Common myeloid progenitor, CD34-positive (primary cell): ENCODE measurements at regions of chr6 and their contacts with region 1.

Region 1: GRCh38 chr6:169789982-169790927 is 38.8 kb downstream of the ERMARD start:
- DNase-seq: peak; percentile 60 to 79 (median 76)
- H3K4me3 ChIP-seq: peak overlapping the region in 6 of 7 experiments; percentile 54 to 78 (median 66)
- H3K27ac ChIP-seq: no peak overlapping the region
- H3K4me1 ChIP-seq: peaks cover 0 to 15% (median 11%) of the 10 kb centered on the region in 4 experiments
- H3K27me3 ChIP-seq: peaks cover 2 to 31% (median 16%) of the 10 kb centered on the region in 5 experiments

Region 2: DNA sequence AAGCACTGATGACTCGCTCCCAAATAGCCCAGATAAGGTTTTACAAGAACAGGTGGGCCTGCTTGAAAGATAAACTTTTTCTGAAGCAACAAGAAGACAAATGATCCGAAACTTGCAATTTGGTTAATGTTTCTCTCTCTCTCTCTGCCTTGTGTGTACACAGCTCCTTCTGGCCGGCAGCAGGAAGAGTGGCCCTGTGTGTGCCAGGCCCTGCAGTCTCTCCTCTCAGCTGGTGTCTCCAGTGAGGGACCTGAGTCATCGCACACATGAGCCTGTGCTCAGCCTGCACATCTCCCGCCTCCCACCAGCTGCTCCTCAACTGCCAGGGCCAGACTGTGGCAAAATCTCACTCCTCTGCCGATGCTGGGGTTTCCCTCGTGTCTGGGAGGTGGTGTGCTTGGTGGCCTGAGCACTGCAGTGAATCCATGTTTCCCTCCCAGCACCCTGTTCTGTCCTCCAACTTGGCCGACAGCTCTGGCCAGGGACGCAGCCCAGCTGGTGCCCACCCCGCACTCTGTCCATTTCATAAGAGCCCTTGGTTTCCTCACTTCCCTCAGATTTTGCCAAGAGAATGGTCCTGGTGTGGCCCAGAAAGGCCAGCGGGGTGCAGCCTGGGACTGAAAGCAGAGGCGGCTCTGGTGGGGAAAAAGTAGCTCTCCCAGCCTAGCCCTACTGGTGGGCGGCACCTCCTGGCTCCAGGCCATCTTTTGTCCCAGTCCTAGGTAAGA is 10.6 kb after region 1 on chr6:
- CTCF ChIA-PET with region 1: interaction called, 72 read pairs
- POLR2A ChIA-PET with region 1: interaction called, 4 read pairs
- DNase-seq: peak in 1 of 3 donors; percentile 8
- H3K4me3 ChIP-seq: no peak overlapping the region
- H3K27ac ChIP-seq: no peak overlapping the region
- H3K4me1 ChIP-seq: peaks cover 0 to 9% (median 6%) of the 10 kb centered on the region in 4 experiments
- H3K27me3 ChIP-seq: peaks cover 6 to 30% (median 16%) of the 10 kb centered on the region in 5 experiments

Region 3: DNA sequence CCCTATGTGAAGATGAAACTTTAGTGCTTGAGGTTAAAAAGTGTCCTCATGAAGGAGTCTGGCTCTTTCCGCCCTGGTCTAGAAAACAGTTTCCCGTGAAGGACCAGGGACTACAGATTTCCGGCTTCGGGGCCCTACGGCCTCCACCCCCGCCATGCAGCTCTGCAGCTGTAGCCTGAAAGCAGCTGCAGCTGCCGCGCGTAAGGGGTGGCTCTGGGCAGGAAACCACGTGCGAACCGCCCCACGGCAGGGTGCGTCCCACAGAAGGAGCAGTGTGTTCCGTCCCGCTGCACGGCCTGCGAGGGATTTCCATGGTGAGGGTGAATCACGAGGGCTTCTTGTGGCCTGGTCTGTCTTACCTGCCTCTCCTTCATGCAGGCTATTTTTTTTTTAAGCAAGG is 78.2 kb after region 1 on chr6:
- CTCF ChIA-PET with region 1: no interaction called
- POLR2A ChIA-PET with region 1: no interaction called
- DNase-seq: peak; percentile 25 to 84 (median 82)
- H3K4me3 ChIP-seq: no peak overlapping the region
- H3K27ac ChIP-seq: no peak overlapping the region
- H3K4me1 ChIP-seq: peaks cover 0 to 6% (median 4%) of the 10 kb centered on the region in 4 experiments
- H3K27me3 ChIP-seq: no peaks in the 10 kb centered on the region

Region 4: GRCh38 chr6:169930799-169931198 is 140.5 kb after region 1 on chr6:
- CTCF ChIA-PET with region 1: interaction called, 11 read pairs
- POLR2A ChIA-PET with region 1: no interaction called
- DNase-seq: peak; percentile 40 to 75 (median 44)
- H3K4me3 ChIP-seq: no peak overlapping the region
- H3K27ac ChIP-seq: no peak overlapping the region
- H3K4me1 ChIP-seq: no peaks in the 10 kb centered on the region
- H3K27me3 ChIP-seq: peaks cover 0 to 9% (median 1%) of the 10 kb centered on the region in 5 experiments

Region 5: DNA sequence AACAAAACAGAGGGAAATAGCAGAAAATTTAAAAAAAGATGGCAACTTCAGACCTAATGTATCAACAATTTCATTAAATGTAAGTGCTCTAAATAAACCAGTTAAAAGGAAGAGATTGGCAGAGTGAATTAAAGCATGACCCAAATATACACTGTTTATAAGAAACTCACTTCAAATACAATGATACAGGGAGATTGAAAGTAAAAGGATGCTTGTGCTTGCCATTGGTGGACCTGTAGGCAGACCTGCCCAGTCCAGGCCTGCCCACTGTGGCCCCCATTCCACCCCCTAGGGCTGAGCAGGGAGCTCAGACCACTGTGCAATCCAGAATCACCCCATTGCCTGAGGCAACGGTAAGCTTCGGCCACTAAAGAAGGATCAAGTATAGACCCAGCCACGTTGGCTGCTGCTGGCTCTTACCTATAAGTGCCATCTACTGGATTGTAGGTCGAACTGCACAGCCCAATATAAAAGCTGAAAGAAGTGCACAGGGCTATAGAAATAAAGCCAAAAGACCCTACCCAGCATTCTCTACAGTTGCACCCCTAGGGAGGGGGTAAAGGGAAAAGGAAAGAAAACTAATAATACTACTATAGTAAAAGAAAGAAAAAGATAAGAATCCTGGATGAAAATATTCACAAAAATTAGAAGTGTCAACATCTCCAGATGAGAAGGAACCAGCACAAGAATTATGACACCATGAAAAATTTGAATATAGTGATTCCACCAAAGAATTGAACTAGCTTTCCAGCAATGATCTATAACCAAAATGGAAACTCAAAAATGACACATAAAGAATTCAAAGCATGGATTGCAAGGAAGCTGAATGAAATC is 726.7 kb after region 1 on chr6:
- CTCF ChIA-PET with region 1: interaction called, 13 read pairs
- POLR2A ChIA-PET with region 1: no interaction called
- DNase-seq: peak; percentile 45 to 77 (median 72)
- H3K4me3 ChIP-seq: peak overlapping the region in 2 of 7 experiments; percentile 31 to 55
- H3K27ac ChIP-seq: no peak overlapping the region
- H3K4me1 ChIP-seq: peaks cover 0 to 2% (median 0%) of the 10 kb centered on the region in 4 experiments
- H3K27me3 ChIP-seq: no peaks in the 10 kb centered on the region

Region 6: DNA sequence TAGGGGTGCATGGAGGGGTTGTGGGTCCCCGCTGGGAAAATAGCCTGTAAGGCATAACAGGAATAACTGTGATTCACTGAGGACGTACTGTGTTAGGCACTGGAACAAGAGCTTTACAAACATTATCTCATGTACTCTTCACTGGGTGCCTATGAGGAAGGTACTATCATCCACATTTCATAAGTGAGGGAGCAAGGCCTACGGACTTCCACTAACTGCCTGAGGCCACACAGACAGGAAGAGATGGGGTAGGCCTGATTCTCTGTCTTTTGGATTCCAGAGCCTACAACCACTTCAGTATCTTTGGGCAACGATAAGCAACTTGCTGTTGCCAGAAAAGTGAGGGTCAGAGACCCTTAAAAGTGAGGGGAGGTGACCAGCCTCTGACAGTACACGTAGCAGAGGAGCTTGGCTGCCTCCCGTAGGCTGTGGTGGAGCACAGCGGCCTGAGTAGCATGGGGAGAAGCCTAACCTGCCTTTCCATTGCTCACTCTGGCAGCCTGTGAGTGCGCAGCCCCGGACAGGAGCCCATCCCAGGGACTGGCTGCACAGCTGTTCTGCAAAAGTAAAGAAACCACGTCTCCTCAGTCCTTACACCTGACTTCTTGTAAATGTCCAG is 732.4 kb after region 1 on chr6:
- CTCF ChIA-PET with region 1: interaction called, 13 read pairs
- POLR2A ChIA-PET with region 1: no interaction called
- DNase-seq: peak in 2 of 3 donors; percentile 34 to 40
- H3K4me3 ChIP-seq: no peak overlapping the region
- H3K27ac ChIP-seq: no peak overlapping the region
- H3K4me1 ChIP-seq: peaks cover 3 to 10% (median 9%) of the 10 kb centered on the region in 4 experiments
- H3K27me3 ChIP-seq: no peaks in the 10 kb centered on the region

Region 7: DNA sequence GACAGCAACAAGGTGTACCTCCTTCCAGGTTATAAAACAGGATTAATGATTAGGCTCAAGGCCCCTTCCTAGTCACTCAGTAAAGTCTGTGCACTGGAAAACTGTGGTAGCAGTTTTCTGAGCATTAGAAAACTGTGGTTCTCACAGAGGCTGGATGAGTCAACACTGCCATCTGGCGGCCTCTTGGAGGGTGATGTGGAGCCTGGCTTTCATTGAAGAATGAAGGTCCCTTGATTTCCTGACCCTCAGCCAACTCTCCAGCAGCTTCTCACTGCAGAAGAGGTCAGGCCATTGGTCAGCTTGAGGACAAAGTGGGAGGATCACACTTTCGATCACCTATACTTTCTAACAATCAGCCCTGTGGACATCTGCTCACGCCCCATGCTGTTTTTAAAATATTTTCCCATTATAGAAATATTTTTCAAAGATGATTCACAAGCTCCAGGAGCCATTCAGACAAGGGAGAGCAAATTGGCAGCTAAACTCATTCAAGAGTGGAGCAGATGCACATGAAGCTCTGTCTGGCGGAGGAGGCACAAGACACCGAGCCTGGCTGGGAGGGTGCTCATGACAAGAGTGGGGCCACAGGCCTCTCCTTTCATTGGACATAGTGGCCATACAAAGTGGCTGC is 739.7 kb after region 1 on chr6:
- CTCF ChIA-PET with region 1: interaction called, 22 read pairs
- POLR2A ChIA-PET with region 1: no interaction called
- DNase-seq: peak; percentile 57 to 76 (median 65)
- H3K4me3 ChIP-seq: no peak overlapping the region
- H3K27ac ChIP-seq: no peak overlapping the region
- H3K4me1 ChIP-seq: no peaks in the 10 kb centered on the region
- H3K27me3 ChIP-seq: no peaks in the 10 kb centered on the region